ENCODE measurements at regions of chr2 and their contacts with region 1.

Region 1: GRCh38 chr2:99489761-99490622 is at the start of gene REV1:
- DNase-seq: peak; percentile 92 to 94
- H3K4me3 ChIP-seq: peak within 1 kb of the TSS; percentile 61 to 80 (median 75)
- H3K27ac ChIP-seq: peak within 1 kb of the TSS; percentile 80 to 89 (median 89)
- H3K4me1 ChIP-seq: peaks cover 15 to 20% of the 10 kb centered on the region in 2 donors
- H3K27me3 ChIP-seq: no peaks in the 10 kb centered on the region
- CTCF ChIP-seq: peak; percentile 16 to 91 (median 83)
- POLR2A ChIP-seq: peak; percentile 72 to 75
- total RNA-seq, gene REV1: 54.7 to 84.4 (median 68.8) TPM

Region 2: DNA sequence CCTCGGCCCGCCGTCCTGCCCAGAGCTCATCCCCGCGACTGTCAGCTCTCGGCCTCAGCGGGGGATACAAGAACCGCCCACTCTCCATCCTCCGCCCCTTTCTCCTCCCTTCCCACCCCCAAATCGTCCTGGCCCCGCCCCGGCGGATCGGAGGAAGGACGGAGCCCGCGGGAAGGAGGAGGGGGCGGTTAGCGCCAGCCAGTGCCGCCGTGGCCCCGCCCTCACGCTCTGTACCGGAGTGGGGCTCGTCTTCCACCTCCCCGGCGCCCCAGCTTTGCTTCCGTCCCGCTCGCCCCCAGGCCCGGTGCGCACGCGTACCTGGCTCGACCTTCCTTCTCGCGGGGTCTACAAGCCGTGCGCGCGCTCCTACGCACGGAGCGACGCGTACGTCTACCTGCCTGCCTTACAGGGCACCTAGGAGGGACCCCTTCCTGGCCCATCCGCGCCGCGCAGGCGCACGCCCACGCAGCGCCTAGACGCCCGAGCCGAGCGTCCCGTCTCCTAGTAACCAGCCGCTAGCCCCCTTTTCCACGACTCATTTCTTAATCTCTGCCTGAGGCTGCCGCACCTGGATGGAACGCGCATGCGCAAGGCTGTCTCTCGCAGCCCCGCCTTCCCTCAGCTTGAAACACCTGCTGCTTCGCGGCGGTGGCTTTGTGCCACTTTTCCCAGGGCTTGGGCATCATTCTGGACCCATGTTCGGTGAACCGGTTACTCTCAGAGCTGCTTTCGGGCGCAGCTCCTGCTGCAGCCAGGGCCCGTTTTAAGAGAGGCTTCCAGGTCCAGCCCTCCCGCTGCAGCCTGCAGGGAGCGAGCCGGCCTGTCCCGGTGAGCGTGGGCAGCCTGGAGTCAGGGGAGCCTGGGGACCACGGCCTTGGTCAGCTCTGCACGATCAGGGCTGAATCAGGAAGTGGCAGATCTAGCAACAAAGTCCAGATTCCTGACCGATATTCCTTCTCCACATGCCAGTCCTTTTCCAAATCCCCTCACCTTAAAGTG is 348.6 kb before region 1 on chr2 and contains the start of gene C2orf15:
- intact Hi-C with region 1: loop called (anchors 5 kb)
- DNase-seq: peak; percentile 99
- H3K4me3 ChIP-seq: peak within 1 kb of the TSS; percentile 32 to 62 (median 44)
- H3K27ac ChIP-seq: peak within 1 kb of the TSS; percentile 77 to 95 (median 80)
- H3K4me1 ChIP-seq: peaks cover 5 to 10% of the 10 kb centered on the region in 2 donors
- H3K27me3 ChIP-seq: no peaks in the 10 kb centered on the region
- CTCF ChIP-seq: peak in 1 of 6 experiments; percentile 27
- POLR2A ChIP-seq: peak in 1 of 2 donors; percentile 97
- total RNA-seq, gene C2orf15: 2.0 to 6.5 (median 4.3) TPM

Region 3: DNA sequence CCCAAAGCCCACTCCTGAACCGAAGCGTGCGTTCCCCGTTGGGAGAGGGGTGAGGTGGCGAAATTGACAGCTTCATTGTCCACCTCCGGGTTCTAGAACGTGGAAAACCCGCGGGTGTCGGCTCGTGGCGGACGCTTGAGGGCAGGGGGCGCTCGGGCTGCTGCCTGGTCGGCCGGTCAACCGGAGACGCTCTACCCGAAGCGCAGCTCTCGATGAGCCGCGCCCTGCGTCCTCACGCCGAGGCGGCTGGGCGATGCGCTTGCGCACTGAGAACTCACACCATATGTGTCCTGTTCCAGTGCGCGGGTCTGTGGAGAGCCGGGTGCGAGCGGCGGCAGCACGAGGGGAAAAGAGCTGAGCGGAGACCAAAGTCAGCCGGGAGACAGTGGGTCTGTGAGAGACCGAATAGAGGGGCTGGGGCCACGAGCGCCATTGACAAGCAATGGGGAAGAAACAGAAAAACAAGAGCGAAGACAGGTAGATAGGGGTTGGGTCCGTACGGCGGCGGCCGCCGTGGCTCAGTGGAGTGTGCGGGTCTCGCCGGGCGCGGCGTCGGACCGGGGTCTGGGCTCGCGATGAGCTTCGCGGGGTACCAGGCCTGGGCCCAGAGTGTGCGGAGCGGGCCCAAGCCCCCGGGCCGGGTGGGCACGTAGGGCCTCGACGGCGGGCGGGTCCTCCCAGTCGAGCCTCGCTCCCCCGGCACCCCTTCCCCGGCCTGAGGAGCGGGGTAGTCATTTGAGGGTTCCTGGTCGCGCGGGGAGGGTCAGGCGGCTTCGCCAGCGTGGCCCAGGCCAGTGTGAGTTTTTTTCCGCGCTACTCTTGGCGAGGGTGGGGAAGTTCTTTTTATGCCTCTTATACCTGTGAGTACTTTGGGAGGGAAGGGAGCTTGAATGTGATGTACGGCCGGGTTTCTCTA is 152.6 kb before region 1 on chr2 and contains the start of gene EIF5B:
- intact Hi-C with region 1: loop called (anchors 5 kb)
- DNase-seq: peak; percentile 96 to 97
- H3K4me3 ChIP-seq: peak within 1 kb of the TSS; percentile 79 to 93 (median 89)
- H3K27ac ChIP-seq: peak within 1 kb of the TSS; percentile 76 to 96 (median 95)
- H3K4me1 ChIP-seq: peaks cover 19 to 22% of the 10 kb centered on the region in 2 donors
- H3K27me3 ChIP-seq: no peaks in the 10 kb centered on the region
- CTCF ChIP-seq: peak; percentile 12 to 71 (median 39)
- POLR2A ChIP-seq: peak in 1 of 2 donors; percentile 78
- total RNA-seq, gene EIF5B: 24.8 to 36.9 (median 29.8) TPM

Region 4: GRCh38 chr2:99397251-99397920 is 92.6 kb before region 1 on chr2:
- intact Hi-C with region 1: no loop called
- DNase-seq: no peak
- H3K4me3 ChIP-seq: no peak overlapping the region
- H3K27ac ChIP-seq: no peak overlapping the region
- H3K4me1 ChIP-seq: no peaks in the 10 kb centered on the region
- H3K27me3 ChIP-seq: no peaks in the 10 kb centered on the region
- CTCF ChIP-seq: no peak
- POLR2A ChIP-seq: no peak

Region 5: DNA sequence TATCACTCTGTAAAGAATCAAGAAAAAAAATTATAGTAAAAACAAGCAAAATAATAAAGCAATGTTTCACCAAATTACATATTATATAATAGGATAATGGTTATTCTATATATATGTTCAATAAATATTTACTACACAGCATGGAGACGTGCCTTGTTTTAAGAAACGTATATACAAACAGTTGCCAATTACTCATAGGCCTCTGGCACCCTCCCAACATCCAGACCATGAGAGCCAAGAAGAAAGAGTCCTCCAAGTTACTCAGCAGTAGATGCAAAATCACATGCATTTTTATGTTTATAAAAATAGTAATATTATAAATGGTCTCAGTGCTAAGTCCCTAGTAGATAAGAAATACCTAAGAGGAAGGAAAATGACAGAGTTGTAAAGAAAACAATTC is 65.0 kb before region 1 on chr2:
- intact Hi-C with region 1: loop called (anchors 10 kb)
- DNase-seq: peak; percentile 13 to 20
- H3K4me3 ChIP-seq: no peak overlapping the region
- H3K27ac ChIP-seq: no peak overlapping the region
- H3K4me1 ChIP-seq: peaks cover under 1% of the 10 kb centered on the region in 2 donors
- H3K27me3 ChIP-seq: no peaks in the 10 kb centered on the region
- CTCF ChIP-seq: no peak
- POLR2A ChIP-seq: no peak